Thyroid gland (tissue), 4 donors: ENCODE measurements at regions of chr3 and their contacts with region 1.

Region 1: DNA sequence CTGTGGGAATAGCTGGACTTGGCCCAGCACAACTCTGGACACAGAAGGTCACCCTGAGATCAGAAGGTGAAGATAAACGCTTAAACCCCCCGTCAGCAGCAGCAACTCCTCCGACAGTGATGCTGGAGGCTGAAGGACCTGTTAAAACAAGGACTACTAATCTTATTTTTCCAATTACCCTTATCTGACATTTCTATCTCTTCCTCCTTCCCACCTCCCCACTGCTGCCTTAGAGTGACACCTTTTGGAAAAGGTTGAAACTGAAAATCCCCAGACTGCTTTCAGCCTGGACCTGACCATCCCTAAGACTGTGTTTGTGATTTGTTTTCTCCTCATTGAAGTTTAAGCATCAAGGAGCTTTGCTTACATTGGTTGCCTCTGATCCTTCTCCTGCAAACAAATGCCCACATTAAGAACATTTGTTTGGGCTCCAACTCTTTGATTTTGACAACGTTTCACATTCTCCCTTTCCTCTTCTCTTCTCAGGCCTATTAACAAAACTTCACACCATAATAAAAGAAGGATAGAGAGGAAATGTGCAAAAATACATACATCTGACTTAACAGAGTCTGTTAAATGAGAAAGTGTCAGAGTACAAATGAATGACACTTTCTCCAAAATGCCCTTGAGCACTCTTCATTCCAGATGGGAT is 410.6 kb upstream of the WNT5A start:
- DNase-seq: peak; percentile 18 to 32
- H3K4me3 ChIP-seq: no peak overlapping the region
- H3K27ac ChIP-seq: no peak overlapping the region
- H3K4me1 ChIP-seq: no peaks in the 10 kb centered on the region
- H3K27me3 ChIP-seq: no peaks in the 10 kb centered on the region
- CTCF ChIP-seq: peak; percentile 30 to 94 (median 72)
- POLR2A ChIP-seq: no peak

Region 2: DNA sequence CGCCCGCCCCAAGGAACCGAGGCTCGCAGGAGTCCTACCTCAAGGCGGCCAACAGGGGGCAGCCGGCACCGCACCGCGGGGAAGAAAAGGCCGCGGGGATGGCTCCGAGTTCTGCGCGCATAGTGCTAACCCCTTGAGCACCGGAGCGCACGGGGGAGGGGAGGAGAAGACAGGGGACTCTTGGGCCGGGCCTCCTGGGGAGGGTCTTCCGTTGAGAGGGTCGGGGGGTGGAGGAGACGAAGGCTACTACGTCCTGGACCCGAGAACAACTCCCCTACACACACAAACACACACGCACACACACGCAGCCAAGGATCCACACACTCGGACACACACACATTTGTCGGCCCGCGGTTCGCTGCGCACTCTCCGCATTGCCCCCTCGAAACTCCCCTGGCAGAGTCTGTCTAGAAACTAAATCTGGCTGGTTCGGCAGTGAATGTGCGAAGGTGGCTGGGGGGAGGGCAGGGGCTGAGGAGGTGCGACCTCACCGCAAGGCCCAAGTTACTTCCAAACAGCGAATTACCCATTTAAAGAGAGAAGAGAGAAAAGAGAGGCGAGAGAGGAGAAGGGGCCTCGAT is 412.4 kb before region 1 on chr3:
- intact Hi-C with region 1: loop called (anchors 5 kb)
- DNase-seq: peak; percentile 80 to 85
- H3K4me3 ChIP-seq: peak overlapping the region in 2 of 3 donors; percentile 72 to 90
- H3K27ac ChIP-seq: peak overlapping the region; percentile 61 to 78 (median 74)
- H3K4me1 ChIP-seq: peaks cover 17 to 30% of the 10 kb centered on the region in 2 donors
- H3K27me3 ChIP-seq: no peaks in the 10 kb centered on the region
- CTCF ChIP-seq: peak; percentile 47 to 96 (median 69)
- POLR2A ChIP-seq: peak in 1 of 2 donors; percentile 17

Region 3: GRCh38 chr3:55647670-55648069 is 250.0 kb before region 1 on chr3:
- intact Hi-C with region 1: no loop called
- DNase-seq: no peak
- H3K4me3 ChIP-seq: no peak overlapping the region
- H3K27ac ChIP-seq: no peak overlapping the region
- H3K4me1 ChIP-seq: no peaks in the 10 kb centered on the region
- H3K27me3 ChIP-seq: no peaks in the 10 kb centered on the region
- CTCF ChIP-seq: no peak
- POLR2A ChIP-seq: no peak

Region 4: GRCh38 chr3:55690726-55691125 is 207.0 kb before region 1 on chr3:
- intact Hi-C with region 1: loop called (anchors 10 kb)
- DNase-seq: peak; percentile 58 to 59
- H3K4me3 ChIP-seq: no peak overlapping the region
- H3K27ac ChIP-seq: peak overlapping the region; percentile 32 to 66 (median 60)
- H3K4me1 ChIP-seq: peaks cover 10 to 27% of the 10 kb centered on the region in 2 donors
- H3K27me3 ChIP-seq: no peaks in the 10 kb centered on the region
- CTCF ChIP-seq: no peak
- POLR2A ChIP-seq: no peak

Region 5: GRCh38 chr3:55765906-55766701 is 131.6 kb before region 1 on chr3:
- intact Hi-C with region 1: loop called (anchors 10 kb)
- DNase-seq: peak; percentile 45 to 64
- H3K4me3 ChIP-seq: no peak overlapping the region
- H3K27ac ChIP-seq: no peak overlapping the region
- H3K4me1 ChIP-seq: no peaks in the 10 kb centered on the region
- H3K27me3 ChIP-seq: no peaks in the 10 kb centered on the region
- CTCF ChIP-seq: no peak
- POLR2A ChIP-seq: no peak

Region 6: GRCh38 chr3:55818485-55818884 is 79.2 kb before region 1 on chr3:
- intact Hi-C with region 1: loop called (anchors 10 kb)
- DNase-seq: no peak
- H3K4me3 ChIP-seq: no peak overlapping the region
- H3K27ac ChIP-seq: no peak overlapping the region
- H3K4me1 ChIP-seq: peaks cover 14 to 23% of the 10 kb centered on the region in 2 donors
- H3K27me3 ChIP-seq: no peaks in the 10 kb centered on the region
- CTCF ChIP-seq: peak in 1 of 6 experiments; percentile 36
- POLR2A ChIP-seq: no peak